ENCODE measurements at regions of chr10 and their contacts with region 1.

Region 1: DNA sequence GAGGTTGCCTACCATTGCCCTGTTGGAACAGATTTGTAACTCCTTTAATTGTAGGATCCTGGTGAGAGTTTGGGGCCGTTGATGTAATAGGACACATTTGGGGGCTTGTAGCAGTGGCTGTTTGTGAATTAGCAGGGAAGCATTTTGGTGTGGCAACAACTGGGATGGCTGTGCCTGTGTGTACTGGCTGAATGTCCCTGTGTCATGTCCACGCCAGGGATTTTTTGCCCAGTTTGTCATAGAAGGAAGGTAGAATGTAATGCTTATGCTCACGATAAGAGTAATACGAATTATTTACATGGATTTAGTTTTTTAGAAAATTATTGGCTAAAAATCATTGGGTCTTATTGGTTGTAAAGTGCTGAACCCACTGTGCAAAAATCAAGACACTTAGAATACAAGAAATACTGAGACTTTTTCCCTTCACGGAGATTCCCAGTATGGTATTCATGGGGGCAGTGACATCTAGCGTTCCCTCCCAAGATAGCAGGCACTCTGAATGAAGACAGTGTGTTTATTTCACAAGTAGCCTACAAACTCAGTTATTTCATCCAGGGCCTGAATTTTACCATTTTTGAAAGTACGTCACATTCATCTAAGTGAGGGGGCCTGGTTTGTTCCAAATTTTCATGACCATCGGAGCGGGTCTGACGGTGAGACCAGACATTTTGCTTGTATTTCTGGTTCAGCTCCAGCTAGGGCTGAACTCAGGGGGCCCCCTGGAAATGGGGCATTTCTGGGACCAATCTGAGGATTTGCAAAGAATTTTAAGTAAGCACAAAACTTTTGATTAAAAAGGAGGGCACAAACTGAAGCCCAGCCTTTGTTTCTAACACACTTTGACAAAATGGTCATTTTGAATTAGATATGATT is 74.7 kb downstream of the CACNB2 start:
- DNase-seq: peak; percentile 46 to 65
- H3K4me3 ChIP-seq: no peak overlapping the region
- H3K4me3 Mint-ChIP-seq: no peak overlapping the region
- H3K27ac Mint-ChIP-seq: no peak overlapping the region
- H3K4me1 ChIP-seq: peaks cover 11% of the 10 kb centered on the region
- H3K4me1 Mint-ChIP-seq: peaks cover 7% of the 10 kb centered on the region
- H3K27me3 ChIP-seq: no peaks in the 10 kb centered on the region
- H3K27me3 Mint-ChIP-seq: peaks cover under 1% of the 10 kb centered on the region
- CTCF ChIP-seq: peak; percentile 81 to 91

Region 2: GRCh38 chr10:17607603-17608332 is 607.2 kb before region 1 on chr10:
- CTCF ChIA-PET with region 1: interaction called, 3 read pairs
- POLR2A ChIA-PET with region 1: no interaction called
- intact Hi-C with region 1: loop called (anchors 1 kb)
- DNase-seq: peak in 1 of 2 experiments; percentile 65
- H3K4me3 ChIP-seq: no peak overlapping the region
- H3K4me3 Mint-ChIP-seq: no peak overlapping the region
- H3K27ac Mint-ChIP-seq: no peak overlapping the region
- H3K4me1 ChIP-seq: no peaks in the 10 kb centered on the region
- H3K4me1 Mint-ChIP-seq: peaks cover 7% of the 10 kb centered on the region
- H3K27me3 ChIP-seq: no peaks in the 10 kb centered on the region
- H3K27me3 Mint-ChIP-seq: no peaks in the 10 kb centered on the region
- CTCF ChIP-seq: peak; percentile 88 to 89

Region 3: GRCh38 chr10:17847585-17848296 is 367.2 kb before region 1 on chr10:
- CTCF ChIA-PET with region 1: interaction called, 8 read pairs
- POLR2A ChIA-PET with region 1: no interaction called
- intact Hi-C with region 1: loop called (anchors 1 kb)
- DNase-seq: peak in 1 of 2 experiments; percentile 23
- H3K4me3 ChIP-seq: no peak overlapping the region
- H3K4me3 Mint-ChIP-seq: no peak overlapping the region
- H3K27ac Mint-ChIP-seq: no peak overlapping the region
- H3K4me1 ChIP-seq: no peaks in the 10 kb centered on the region
- H3K4me1 Mint-ChIP-seq: no peaks in the 10 kb centered on the region
- H3K27me3 ChIP-seq: peaks cover 1% of the 10 kb centered on the region; the same call in 1 of the 2 replicates
- H3K27me3 Mint-ChIP-seq: peaks cover 18% of the 10 kb centered on the region
- CTCF ChIP-seq: peak; percentile 47 to 62

Region 4: GRCh38 chr10:18000601-18001000 is 214.3 kb before region 1 on chr10:
- CTCF ChIA-PET with region 1: no interaction called
- POLR2A ChIA-PET with region 1: no interaction called
- intact Hi-C with region 1: loop called (anchors 5 kb)
- DNase-seq: no peak
- H3K4me3 ChIP-seq: no peak overlapping the region
- H3K4me3 Mint-ChIP-seq: no peak overlapping the region
- H3K27ac Mint-ChIP-seq: no peak overlapping the region
- H3K4me1 ChIP-seq: no peaks in the 10 kb centered on the region; the same call in 1 of the 2 replicates
- H3K4me1 Mint-ChIP-seq: no peaks in the 10 kb centered on the region
- H3K27me3 ChIP-seq: no peaks in the 10 kb centered on the region; the same call in 1 of the 2 replicates
- H3K27me3 Mint-ChIP-seq: peaks cover 11% of the 10 kb centered on the region
- CTCF ChIP-seq: no peak

Region 5: DNA sequence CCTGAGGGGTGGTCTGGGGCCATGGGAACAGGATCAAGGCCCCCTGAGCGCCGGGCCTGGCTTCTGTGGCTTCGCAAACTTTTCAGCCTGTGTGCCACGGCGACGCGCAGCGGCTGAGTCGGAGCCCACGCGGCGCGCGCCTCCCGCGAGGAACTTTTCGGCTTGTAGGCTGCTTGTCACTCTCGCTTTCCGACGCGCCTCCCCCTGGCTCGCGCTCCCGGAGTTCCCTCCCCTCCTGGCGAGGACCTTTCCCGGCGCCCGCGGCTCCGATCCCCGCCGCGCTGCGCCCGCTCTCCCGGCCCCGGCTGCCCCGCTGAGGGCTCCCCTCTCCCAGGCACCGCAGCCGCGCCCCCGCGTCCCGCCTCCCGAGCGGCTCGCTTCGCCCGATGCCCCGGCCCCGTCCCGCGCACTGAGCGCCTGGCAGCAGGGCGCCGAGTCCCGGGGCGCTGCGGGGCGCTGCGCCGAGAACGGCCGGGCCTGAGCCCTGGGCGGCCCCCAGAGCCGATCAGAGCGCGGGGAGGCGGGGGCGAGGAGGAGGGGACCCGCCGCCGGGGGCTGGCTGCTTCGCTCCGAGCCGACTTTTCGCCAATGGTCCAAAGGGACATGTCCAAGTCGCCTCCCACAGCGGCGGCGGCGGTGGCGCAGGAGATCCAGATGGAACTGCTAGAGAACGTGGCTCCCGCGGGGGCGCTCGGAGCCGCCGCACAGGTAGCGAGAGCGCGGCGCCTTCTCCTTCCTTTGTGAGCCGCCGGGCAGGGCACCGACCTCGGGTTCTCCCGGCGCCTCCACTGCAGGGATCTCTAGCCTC is 74.6 kb before region 1 on chr10 and contains the start of gene CACNB2:
- CTCF ChIA-PET with region 1: no interaction called
- POLR2A ChIA-PET with region 1: no interaction called
- intact Hi-C with region 1: loop called (anchors 2 kb)
- DNase-seq: peak; percentile 67 to 70
- H3K4me3 ChIP-seq: peak within 1 kb of the TSS; percentile 44
- H3K4me3 Mint-ChIP-seq: peak within 1 kb of the TSS; percentile 75
- H3K27ac Mint-ChIP-seq: no peak within 1 kb of the TSS
- H3K4me1 ChIP-seq: peaks cover 4% of the 10 kb centered on the region; the same call in 1 of the 2 replicates
- H3K4me1 Mint-ChIP-seq: no peaks in the 10 kb centered on the region
- H3K27me3 ChIP-seq: peaks cover 6% of the 10 kb centered on the region
- H3K27me3 Mint-ChIP-seq: peaks cover 28% of the 10 kb centered on the region
- CTCF ChIP-seq: no peak
- total RNA-seq, gene CACNB2: 0.98 and 1.8 TPM in 2 replicates